ENCODE measurements at regions of chr4 and their contacts with region 1.

Region 1: DNA sequence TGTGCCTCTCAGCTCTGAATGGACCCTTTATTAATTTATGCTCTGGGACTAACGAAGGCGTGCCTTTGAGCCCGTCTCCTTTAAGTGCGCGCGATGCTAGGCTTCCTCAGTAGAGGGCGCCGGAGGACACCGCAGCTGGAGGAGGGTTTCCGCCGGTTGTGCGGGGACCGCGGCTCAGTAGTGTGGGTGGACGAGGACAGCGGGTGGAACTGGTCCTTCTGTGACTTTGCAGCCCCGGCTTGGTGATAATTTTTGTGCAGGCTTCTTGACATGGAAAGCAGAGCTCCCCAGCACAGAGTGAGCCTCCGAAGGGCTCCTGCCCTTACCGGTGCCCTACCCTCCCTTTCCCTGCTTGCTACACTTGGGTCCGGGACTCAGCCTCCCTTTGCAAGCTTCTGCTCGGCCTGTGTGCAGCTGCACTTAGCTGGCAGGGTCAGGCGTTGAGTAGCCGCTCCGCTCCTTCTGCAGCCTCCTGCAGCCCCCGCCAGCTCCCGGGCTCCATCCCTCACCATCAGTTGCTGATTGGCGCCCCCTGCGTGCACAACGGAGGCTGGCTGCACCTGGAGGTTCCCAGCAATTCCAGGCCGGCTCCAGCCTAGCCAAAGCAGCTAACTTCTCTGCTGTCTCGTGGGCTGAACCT is 26.8 kb upstream of the BOD1L1 start:
- DNase-seq: no peak
- ATAC-seq: peak; percentile 98
- H3K4me3 ChIP-seq: peak overlapping the region; percentile 64
- H3K27ac ChIP-seq: no peak overlapping the region
- H3K4me1 ChIP-seq: no peaks in the 10 kb centered on the region
- H3K27me3 ChIP-seq: no peaks in the 10 kb centered on the region; a peak in 1 of 4 replicates
- CTCF ChIP-seq: peak; percentile 82 to 96 (median 86)
- EP300 ChIP-seq: no peak
- POLR2A ChIP-seq: no peak
- RAD21 ChIP-seq: peak; percentile 71

Region 2: DNA sequence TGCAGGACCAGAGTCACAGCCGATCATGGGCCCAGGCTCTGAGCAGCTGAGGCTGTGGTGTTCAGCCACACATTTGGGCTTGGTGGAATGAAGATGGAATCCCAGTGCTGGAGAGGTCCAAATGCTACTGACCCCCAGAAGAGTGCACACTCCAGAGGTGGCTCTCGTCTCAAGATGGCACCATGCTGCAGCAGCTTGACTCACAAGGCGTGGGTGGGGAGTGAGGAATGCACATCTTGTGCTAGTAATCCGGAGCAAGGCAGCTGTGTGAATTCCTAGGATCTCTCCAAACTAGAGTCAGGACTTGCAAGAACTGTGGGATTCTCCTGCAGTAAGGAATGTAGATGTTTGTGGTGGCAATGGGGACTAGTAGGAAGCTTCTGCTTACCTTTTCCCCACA is 198.9 kb before region 1 on chr4:
- CTCF ChIA-PET with region 1: no interaction called
- POLR2A ChIA-PET with region 1: no interaction called
- RAD21 ChIA-PET with region 1: no interaction called
- SMC1A ChIA-PET with region 1: no interaction called
- in situ Hi-C with region 1: no loop called
- intact Hi-C with region 1: no loop called
- DNase-seq: no peak
- ATAC-seq: no peak
- H3K4me3 ChIP-seq: no peak overlapping the region
- H3K27ac ChIP-seq: no peak overlapping the region
- H3K4me1 ChIP-seq: no peaks in the 10 kb centered on the region
- H3K27me3 ChIP-seq: no peaks in the 10 kb centered on the region
- CTCF ChIP-seq: no peak
- EP300 ChIP-seq: no peak
- POLR2A ChIP-seq: no peak
- RAD21 ChIP-seq: no peak

Region 3: DNA sequence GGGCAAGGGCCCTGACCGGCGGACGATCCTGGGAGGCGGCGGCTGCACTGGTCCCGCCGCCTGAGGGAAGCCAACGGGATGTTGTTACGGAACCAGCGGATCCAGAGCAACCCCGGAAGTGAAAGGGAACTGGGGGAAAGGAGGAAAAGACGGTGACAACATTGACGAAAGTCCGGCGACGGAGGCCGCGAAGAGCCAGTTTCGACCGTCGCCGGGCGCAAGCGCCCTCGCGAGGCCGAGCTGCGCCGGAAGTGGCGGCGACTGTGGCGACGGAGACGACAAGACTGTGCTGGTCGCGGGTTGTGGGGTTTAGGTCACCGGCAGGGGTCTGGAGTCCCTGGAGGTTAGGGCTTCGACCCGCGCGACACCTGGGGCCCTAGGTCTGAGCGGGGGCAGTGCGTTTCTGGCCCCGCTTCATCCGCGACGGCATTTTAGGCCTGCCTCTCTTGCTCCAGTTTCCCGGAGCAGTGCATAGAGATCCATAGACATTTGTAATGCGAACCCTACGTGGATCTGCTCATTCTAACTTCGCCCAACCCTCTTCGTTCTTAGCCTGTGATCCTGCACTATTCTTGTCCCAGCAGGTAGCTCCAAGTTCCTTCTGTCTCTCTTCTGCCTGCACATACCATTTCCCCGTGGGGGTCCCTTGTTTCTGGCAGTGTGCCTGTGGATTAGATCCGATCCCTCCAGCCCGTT is 26.5 kb before region 1 on chr4 and contains the start of gene BOD1L1:
- CTCF ChIA-PET with region 1: interaction called, 20 read pairs
- POLR2A ChIA-PET with region 1: no interaction called
- RAD21 ChIA-PET with region 1: interaction called, 3 read pairs
- SMC1A ChIA-PET with region 1: interaction called, 7 read pairs
- in situ Hi-C with region 1: no loop called
- intact Hi-C with region 1: no loop called
- DNase-seq: peak; percentile 60
- ATAC-seq: peak; percentile 88
- H3K4me3 ChIP-seq: peak within 1 kb of the TSS; percentile 92
- H3K27ac ChIP-seq: peak within 1 kb of the TSS; percentile 90
- H3K4me1 ChIP-seq: no peaks in the 10 kb centered on the region
- H3K27me3 ChIP-seq: no peaks in the 10 kb centered on the region
- CTCF ChIP-seq: peak; percentile 57 to 62 (median 58)
- EP300 ChIP-seq: peak in 1 of 2 experiments; percentile 49; a peak in 2 of 4 replicates
- POLR2A ChIP-seq: peak; percentile 95
- RAD21 ChIP-seq: 0 out of 2 replicates have a peak, but pooled peaks have one; percentile 29
- polyA plus RNA-seq, gene BOD1L1: 6.8 to 12.1 TPM

Region 4: DNA sequence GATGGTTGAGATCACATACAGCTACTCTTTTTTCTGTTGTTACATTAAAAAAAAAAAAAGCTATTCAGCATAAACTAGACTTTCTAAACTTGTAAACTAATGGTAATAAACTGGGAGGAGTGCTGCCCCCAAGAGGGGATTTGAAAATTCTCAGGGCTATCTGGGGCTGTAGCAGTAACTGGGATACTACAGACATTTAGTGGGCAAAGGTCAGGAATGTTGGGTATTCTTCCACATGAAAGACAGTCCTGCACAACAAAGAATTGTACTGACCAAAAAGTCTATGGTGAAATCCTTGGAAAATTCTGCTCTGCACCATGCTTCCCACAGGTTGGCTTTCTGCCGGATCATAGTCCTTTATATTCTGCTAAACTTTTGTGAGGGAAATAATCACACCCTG is 205.8 kb after region 1 on chr4:
- CTCF ChIA-PET with region 1: interaction called, 66 read pairs
- POLR2A ChIA-PET with region 1: no interaction called
- RAD21 ChIA-PET with region 1: interaction called, 16 read pairs
- SMC1A ChIA-PET with region 1: interaction called, 19 read pairs
- in situ Hi-C with region 1: no loop called
- intact Hi-C with region 1: loop called (anchors 10 kb)
- DNase-seq: no peak
- ATAC-seq: no peak
- H3K4me3 ChIP-seq: no peak overlapping the region
- H3K27ac ChIP-seq: no peak overlapping the region
- H3K4me1 ChIP-seq: no peaks in the 10 kb centered on the region
- H3K27me3 ChIP-seq: no peaks in the 10 kb centered on the region
- CTCF ChIP-seq: no peak
- EP300 ChIP-seq: no peak
- POLR2A ChIP-seq: no peak
- RAD21 ChIP-seq: no peak

Region 5: DNA sequence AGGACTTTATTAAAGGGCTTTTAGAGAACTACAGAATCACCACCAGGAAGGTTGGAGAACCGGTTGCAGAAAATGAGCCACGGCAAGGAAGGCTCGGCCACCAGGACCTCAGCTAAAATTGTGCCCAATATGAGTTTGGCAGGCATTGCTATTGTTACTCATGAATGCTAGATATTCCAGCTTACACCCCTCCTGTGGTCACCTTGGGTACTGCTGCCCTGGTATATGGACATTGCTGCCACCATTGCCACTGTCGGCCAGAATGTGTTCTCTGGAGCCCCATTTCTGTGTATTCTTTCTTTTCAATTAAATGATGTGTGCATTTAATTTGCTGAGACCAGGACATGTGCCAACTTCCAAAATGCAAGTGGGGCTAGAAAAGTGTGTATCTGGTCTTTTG is 600.0 kb after region 1 on chr4:
- CTCF ChIA-PET with region 1: interaction called, 4 read pairs
- POLR2A ChIA-PET with region 1: no interaction called
- RAD21 ChIA-PET with region 1: no interaction called
- SMC1A ChIA-PET with region 1: interaction called, 8 read pairs
- in situ Hi-C with region 1: no loop called
- intact Hi-C with region 1: loop called (anchors 2 kb)
- DNase-seq: no peak
- ATAC-seq: peak; percentile 89
- H3K4me3 ChIP-seq: no peak overlapping the region
- H3K27ac ChIP-seq: no peak overlapping the region
- H3K4me1 ChIP-seq: no peaks in the 10 kb centered on the region
- H3K27me3 ChIP-seq: no peaks in the 10 kb centered on the region
- CTCF ChIP-seq: peak; percentile 39 to 47 (median 41); a peak in 4 of 6 replicates
- EP300 ChIP-seq: no peak
- POLR2A ChIP-seq: no peak
- RAD21 ChIP-seq: peak; percentile 57

Region 6: DNA sequence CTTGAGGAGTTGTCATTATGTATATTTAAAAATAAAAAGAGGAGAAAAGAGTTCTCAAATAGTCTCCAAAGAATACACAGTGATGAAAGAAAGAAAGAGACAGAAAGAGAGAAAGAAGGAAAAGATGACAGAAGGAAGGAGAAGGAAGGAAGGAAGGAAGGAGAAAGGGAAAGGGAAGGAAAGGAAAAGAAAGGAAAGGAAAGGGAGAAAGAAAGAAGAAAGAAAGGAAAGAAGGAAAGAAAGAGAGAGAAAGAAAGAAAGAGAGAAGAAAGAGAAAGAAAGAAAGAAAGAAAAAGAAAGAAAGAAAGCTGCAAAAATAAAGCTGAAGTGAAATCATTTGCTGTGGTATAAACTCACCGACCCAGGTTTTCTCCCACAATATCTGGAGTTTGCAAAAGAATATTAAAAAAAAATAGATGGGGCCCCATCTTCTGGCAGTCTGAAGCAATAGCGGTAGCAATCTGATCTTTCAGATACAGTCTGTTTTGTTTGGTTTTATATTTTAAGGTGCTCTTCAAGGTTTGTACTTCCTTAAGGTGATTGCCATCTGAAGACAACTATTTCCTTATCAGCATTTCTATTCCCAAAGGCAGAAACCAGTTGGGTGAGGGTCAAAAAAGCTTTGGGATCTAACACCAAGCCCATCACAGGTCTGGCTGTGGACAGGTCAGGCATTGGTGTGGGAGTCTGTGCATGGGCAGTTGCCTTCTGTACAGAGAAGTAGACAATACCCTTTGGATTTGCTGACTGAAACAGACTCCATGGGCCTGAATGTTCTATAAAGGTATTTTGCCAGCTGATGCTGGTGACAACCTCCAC is 1508.4 kb after region 1 on chr4:
- CTCF ChIA-PET with region 1: interaction called, 10 read pairs
- POLR2A ChIA-PET with region 1: no interaction called
- RAD21 ChIA-PET with region 1: interaction called, 6 read pairs
- SMC1A ChIA-PET with region 1: interaction called, 4 read pairs
- in situ Hi-C with region 1: loop called (anchors 10 kb)
- intact Hi-C with region 1: loop called (anchors 1 kb)
- DNase-seq: no peak
- ATAC-seq: peak; percentile 73
- H3K4me3 ChIP-seq: no peak overlapping the region
- H3K27ac ChIP-seq: no peak overlapping the region
- H3K4me1 ChIP-seq: no peaks in the 10 kb centered on the region
- H3K27me3 ChIP-seq: no peaks in the 10 kb centered on the region
- CTCF ChIP-seq: peak; percentile 19 to 52 (median 31); a peak in 4 of 6 replicates
- EP300 ChIP-seq: no peak
- POLR2A ChIP-seq: no peak
- RAD21 ChIP-seq: peak; percentile 67

Region 7: DNA sequence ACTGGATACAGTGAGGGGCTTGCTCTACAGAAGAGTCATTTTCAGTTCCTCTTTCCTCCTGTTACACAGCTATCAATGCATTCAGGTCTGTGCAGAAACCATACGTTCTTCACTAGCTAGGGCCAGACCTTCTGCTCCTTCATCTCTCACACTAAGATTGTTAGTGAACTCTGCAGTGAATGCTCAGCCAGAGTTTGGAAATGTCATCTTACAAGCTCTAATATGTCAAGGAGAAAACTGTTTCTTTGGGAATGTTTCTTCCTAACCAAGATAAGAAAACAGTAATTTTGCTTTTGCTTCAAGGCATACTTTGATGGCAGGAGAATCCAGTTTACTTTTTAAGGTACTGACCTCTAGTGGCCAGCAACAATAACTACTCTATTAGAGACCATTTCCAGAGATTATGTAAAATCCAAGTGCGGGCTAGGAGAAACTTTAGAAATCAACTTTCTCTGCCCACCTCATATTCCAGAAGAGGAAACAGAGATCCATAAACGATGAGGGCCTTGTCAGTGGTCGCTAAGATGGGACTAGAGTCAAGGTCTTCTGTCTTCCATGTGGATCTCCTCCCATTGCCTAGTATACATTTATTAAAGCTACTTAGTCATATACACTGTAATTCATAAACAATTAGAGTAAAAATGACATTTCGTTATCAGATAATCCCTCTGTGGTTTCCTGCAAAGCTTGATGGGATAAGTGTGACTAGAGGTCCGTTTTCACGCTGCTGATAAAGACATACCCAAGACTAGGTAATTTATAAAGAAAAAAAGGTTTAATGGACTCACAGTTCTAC is 1803.3 kb after region 1 on chr4:
- CTCF ChIA-PET with region 1: interaction called, 3 read pairs
- POLR2A ChIA-PET with region 1: no interaction called
- RAD21 ChIA-PET with region 1: no interaction called
- SMC1A ChIA-PET with region 1: no interaction called
- in situ Hi-C with region 1: loop called (anchors 10 kb)
- intact Hi-C with region 1: loop called (anchors 5 kb)
- DNase-seq: peak; percentile 20
- ATAC-seq: peak; percentile 97
- H3K4me3 ChIP-seq: no peak overlapping the region
- H3K27ac ChIP-seq: no peak overlapping the region
- H3K4me1 ChIP-seq: no peaks in the 10 kb centered on the region
- H3K27me3 ChIP-seq: no peaks in the 10 kb centered on the region
- CTCF ChIP-seq: peak; percentile 66 to 71 (median 67)
- EP300 ChIP-seq: no peak
- POLR2A ChIP-seq: no peak
- RAD21 ChIP-seq: peak; percentile 67

Measured in GM12878 (cell line).